ENCODE measurements at regions of chr6 and their contacts with region 1.

Region 1: DNA sequence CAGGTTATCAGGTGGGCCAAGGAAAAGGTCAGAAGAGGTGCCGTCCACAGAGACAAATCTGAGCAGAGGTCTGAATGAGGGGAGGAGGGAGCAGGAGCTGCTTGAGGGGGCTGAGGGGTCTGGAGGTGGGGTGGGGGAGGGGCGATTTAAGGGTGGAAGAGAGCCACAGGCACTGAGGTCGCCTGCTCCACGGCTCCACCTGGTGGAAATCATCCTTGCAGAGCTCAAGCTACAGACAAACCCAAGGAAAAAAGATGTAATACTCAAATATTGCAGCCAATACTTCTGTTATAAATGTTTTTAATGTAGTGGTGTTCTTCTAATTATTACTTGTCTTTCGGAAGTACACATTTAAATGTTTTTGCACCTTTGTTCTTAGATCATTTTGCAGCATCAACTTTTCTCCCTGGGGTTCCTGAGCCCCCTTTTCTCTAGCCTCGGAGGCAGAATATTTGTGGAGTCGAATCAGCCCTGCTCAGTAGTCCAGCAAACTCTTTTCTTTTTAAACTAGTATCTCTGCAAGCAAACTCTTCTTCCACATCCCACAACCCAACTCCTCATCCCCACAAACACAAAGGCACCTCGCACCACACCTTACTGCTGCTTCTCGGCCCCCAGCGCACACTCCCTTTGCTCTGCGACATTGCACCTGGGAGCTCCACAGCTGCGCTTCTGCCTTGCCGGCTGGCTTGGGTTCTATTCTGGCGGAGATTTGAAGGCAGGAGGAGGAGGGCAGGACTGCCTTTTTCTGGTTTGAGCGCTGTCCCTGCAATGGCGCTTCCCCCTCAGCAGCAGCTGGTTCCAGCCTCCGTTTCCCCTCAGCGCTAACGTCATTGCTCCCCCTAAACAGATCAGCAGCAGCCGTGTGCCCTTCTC is 51.0 kb upstream of the TFAP2A start:
- DNase-seq: peak; percentile 67
- H3K4me3 ChIP-seq: no peak overlapping the region
- H3K27ac ChIP-seq: no peak overlapping the region
- H3K4me1 ChIP-seq: no peaks in the 10 kb centered on the region
- H3K27me3 ChIP-seq: no peaks in the 10 kb centered on the region
- CTCF ChIP-seq: peak; percentile 70

Region 2: DNA sequence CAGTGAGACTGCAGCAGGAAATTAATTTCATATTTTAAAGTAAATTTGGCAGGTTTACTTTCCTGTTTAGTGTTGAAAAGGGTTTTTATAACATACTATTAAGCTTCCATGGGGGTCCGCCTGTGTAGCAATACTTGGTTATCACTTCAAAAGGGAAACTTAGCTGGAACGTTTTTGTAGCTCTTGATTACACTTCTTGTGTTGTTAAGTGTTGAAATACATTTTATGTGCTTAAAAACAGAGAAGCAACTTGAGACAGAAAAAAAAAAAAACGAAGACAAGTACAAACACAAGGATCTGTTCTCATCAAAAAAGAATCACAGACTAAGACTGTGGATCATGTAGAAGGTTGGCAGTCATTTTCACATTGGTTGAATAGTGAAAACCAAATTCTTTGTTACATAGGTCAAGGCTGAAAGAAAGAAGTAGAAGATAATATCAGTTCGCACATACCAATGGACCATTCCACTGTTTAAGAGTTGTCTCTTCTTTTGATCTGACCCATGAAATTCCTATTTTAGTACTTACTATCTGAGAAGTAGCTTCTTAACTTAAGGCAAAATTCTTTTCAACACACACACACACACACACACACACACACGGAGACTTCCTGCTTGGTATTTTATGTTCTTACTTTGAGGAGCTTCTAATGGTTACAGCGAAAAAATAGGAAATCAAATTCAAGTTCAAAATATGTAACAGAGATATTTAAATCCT is 1916.6 kb before region 1 on chr6:
- CTCF ChIA-PET with region 1: no interaction called
- POLR2A ChIA-PET with region 1: interaction called, 12 read pairs
- intact Hi-C with region 1: no loop called
- DNase-seq: peak; percentile 57
- H3K4me3 ChIP-seq: no peak overlapping the region
- H3K27ac ChIP-seq: peak overlapping the region; percentile 36
- H3K4me1 ChIP-seq: peaks cover 54% of the 10 kb centered on the region
- H3K27me3 ChIP-seq: no peaks in the 10 kb centered on the region
- CTCF ChIP-seq: no peak